Activated T-helper 1 cell treated with anti-CD3 and anti-CD28 coated beads, Interleukin-12 subunit alpha, Interleukin-12 subunit beta, Interleukin-2, Interleukin-4 antibody, amounts not matched to agents 30 ng/mL and 10 ng/mL and 1 ng/mL, durations not matched to agents 14 hours and 24 hours and 36 hours (primary cell): ENCODE measurements at regions of chr1 and their contacts with region 1.

Region 1: GRCh38 chr1:89719502-89720306 is 86.8 kb downstream of the LRRC8C start:
- DNase-seq: no peak
- H3K4me3 Mint-ChIP-seq: peak overlapping the region; percentile 76
- H3K27ac Mint-ChIP-seq: peak overlapping the region; percentile 100
- H3K4me1 Mint-ChIP-seq: peaks cover 88% of the 10 kb centered on the region
- H3K27me3 Mint-ChIP-seq: no peaks in the 10 kb centered on the region

Region 2: DNA sequence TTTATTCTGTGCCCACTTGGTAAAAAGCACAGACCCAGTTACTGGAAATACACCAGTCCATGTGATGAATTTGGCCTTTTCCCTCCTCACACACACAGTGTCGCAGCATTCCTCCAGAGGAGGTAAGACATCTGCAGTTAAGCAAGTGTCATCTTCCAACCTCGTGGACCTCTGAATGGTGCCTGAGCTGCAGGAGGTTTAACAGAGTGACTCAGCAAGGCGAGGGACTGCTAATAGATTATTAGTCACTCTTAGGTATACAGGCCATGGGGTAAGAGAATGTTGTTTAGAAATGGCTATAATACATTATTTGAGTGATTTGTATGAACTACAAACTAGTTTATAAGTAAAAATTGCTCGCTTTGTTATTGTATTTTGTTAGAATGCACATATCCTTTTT is 203.6 kb before region 1 on chr1:
- intact Hi-C with region 1: loop called (anchors 1 kb)
- DNase-seq: no peak
- H3K4me3 Mint-ChIP-seq: no peak overlapping the region
- H3K27ac Mint-ChIP-seq: no peak overlapping the region
- H3K4me1 Mint-ChIP-seq: peaks cover 39% of the 10 kb centered on the region
- H3K27me3 Mint-ChIP-seq: peaks cover 3% of the 10 kb centered on the region

Region 3: GRCh38 chr1:89611721-89612120 is 108.0 kb before region 1 on chr1:
- intact Hi-C with region 1: loop called (anchors 1 kb)
- DNase-seq: no peak
- H3K4me3 Mint-ChIP-seq: peak overlapping the region; percentile 73
- H3K27ac Mint-ChIP-seq: peak overlapping the region; percentile 99
- H3K4me1 Mint-ChIP-seq: peaks cover 88% of the 10 kb centered on the region
- H3K27me3 Mint-ChIP-seq: no peaks in the 10 kb centered on the region

Region 4: GRCh38 chr1:89701746-89702241 is 17.9 kb before region 1 on chr1:
- intact Hi-C with region 1: loop called (anchors 1 kb)
- DNase-seq: no peak
- H3K4me3 Mint-ChIP-seq: peak overlapping the region; percentile 12
- H3K27ac Mint-ChIP-seq: peak overlapping the region; percentile 72
- H3K4me1 Mint-ChIP-seq: peaks cover 83% of the 10 kb centered on the region
- H3K27me3 Mint-ChIP-seq: no peaks in the 10 kb centered on the region

Region 5: GRCh38 chr1:89757532-89757931 is 37.8 kb after region 1 on chr1:
- intact Hi-C with region 1: loop called (anchors 1 kb)
- DNase-seq: peak; percentile 51
- H3K4me3 Mint-ChIP-seq: peak overlapping the region; percentile 78
- H3K27ac Mint-ChIP-seq: peak overlapping the region; percentile 93
- H3K4me1 Mint-ChIP-seq: peaks cover 89% of the 10 kb centered on the region
- H3K27me3 Mint-ChIP-seq: no peaks in the 10 kb centered on the region

Region 6: DNA sequence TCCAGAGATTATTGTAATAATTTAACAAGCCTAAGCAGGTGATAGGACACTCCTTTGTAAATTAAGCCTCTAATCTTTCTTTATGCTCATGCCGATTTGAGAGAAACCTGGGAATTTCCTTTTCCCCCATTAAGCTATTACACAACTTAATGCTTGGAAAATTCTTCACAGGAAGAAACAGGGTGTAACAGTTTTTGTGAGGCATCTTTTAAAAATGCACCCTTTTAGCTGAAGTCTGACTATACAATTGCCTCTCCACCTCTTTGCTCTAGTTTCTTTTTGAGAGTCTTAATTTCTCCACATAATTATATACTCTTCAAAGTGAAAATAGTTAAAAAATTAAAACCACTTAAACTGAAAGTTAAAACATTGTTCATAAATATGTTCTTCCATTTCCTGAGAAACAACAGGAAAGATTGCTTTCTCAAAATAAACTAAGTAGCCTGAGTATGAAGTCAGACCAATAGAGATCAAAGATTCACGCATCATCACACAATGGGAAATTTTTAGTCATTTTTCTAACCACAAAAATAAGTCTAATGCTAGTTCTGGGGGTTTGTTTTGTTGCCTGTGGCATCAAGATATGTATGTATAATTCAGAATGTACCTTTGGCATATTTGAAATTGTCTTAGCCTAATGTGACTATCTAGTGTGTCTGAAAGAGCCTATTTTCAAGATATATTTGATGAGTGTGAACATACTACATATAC is 135.9 kb after region 1 on chr1:
- intact Hi-C with region 1: loop called (anchors 5 kb)
- DNase-seq: no peak
- H3K4me3 Mint-ChIP-seq: no peak overlapping the region
- H3K27ac Mint-ChIP-seq: no peak overlapping the region
- H3K4me1 Mint-ChIP-seq: peaks cover 4% of the 10 kb centered on the region
- H3K27me3 Mint-ChIP-seq: no peaks in the 10 kb centered on the region

Region 7: DNA sequence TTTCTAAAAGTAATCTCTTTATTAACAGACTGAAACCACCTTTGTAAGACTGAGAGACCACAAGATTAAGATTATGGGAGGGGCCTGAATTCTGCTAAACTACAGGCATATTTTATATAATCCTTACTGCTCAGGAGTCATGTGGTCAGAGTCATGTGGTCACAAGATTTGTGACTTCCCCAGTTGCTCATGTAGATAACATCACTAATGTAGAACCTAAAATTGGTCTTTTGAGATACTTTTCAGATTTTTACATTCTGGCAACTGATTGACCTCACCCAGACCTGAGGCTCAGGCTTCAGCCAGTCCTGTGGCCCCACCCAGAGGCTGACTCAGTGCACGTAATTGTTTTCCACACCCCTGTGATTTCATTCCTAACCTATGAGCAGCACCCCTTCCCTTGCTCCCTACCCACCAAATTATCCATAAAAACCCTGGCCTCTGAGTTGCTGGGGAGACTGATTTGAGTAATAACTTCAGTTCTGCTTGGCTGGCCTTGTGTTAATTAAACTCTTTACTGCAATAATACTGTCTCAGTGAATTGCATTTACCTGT is 233.4 kb after region 1 on chr1:
- intact Hi-C with region 1: no loop called
- DNase-seq: no peak
- H3K4me3 Mint-ChIP-seq: no peak overlapping the region
- H3K27ac Mint-ChIP-seq: no peak overlapping the region
- H3K4me1 Mint-ChIP-seq: peaks cover 47% of the 10 kb centered on the region
- H3K27me3 Mint-ChIP-seq: no peaks in the 10 kb centered on the region